ENCODE measurements at regions of chrX and their contacts with region 1.

Region 1: DNA sequence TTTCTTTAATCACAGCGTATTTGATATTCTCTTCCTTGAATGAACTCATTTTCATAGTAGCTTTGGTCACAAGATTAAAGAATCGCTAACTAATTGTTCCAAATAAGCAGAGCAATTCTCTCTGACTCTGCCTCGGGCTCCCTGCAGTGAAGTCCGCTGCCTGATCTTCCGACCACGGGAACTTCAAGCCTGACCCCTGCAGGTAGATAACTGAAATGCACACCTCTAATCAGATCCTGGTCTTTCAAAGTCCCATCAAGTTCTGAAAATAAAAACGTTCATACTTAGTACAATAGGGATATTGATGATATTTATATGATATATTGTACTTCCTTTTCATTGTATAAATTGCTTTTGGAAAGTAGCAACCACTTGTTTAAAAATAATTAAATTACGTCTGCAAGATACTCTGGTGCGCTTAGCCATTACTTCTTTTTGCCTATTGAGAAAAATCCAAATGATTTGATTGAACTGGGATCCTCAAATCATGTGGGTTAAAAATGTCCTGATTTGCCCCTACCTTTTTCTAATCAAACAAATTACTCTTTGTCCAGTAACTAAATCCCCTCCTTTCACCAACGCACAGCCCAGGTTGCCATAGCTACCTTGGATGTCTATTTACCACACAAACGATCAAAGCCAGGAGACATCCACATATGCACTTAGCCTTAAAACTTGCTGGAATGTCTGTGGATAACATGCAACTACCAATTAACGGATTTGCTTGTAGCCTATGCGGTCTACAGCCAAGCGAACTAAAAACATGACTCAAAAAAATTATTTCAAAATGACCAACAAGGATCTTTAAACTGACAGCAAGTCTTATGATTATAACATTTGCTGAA is 4.2 kb downstream of the MID1 start:
- DNase-seq: peak in 1 of 2 experiments; percentile 73
- ATAC-seq: peak; percentile 41 to 52; a peak in 3 of 6 replicates
- H3K4me3 ChIP-seq: peak overlapping the region; percentile 68
- H3K27ac ChIP-seq: peak overlapping the region; percentile 76 to 95
- H3K4me1 ChIP-seq: peaks cover 44% of the 10 kb centered on the region
- CTCF ChIP-seq: peak; percentile 75
- EP300 ChIP-seq: no peak
- POLR2A ChIP-seq: no peak
- RAD21 ChIP-seq: peak; percentile 78

Region 2: GRCh38 chrX:10555846-10556245 is 60.3 kb before region 1 on chrX:
- CTCF ChIA-PET with region 1: no interaction called
- POLR2A ChIA-PET with region 1: no interaction called
- DNase-seq: no peak
- ATAC-seq: no peak
- H3K4me3 ChIP-seq: no peak overlapping the region
- H3K27ac ChIP-seq: peak overlapping the region in 1 of 2 experiments; percentile 52; a peak in 2 of 6 replicates
- H3K4me1 ChIP-seq: peaks cover 63% of the 10 kb centered on the region
- CTCF ChIP-seq: no peak
- EP300 ChIP-seq: no peak
- POLR2A ChIP-seq: no peak
- RAD21 ChIP-seq: no peak

Region 3: DNA sequence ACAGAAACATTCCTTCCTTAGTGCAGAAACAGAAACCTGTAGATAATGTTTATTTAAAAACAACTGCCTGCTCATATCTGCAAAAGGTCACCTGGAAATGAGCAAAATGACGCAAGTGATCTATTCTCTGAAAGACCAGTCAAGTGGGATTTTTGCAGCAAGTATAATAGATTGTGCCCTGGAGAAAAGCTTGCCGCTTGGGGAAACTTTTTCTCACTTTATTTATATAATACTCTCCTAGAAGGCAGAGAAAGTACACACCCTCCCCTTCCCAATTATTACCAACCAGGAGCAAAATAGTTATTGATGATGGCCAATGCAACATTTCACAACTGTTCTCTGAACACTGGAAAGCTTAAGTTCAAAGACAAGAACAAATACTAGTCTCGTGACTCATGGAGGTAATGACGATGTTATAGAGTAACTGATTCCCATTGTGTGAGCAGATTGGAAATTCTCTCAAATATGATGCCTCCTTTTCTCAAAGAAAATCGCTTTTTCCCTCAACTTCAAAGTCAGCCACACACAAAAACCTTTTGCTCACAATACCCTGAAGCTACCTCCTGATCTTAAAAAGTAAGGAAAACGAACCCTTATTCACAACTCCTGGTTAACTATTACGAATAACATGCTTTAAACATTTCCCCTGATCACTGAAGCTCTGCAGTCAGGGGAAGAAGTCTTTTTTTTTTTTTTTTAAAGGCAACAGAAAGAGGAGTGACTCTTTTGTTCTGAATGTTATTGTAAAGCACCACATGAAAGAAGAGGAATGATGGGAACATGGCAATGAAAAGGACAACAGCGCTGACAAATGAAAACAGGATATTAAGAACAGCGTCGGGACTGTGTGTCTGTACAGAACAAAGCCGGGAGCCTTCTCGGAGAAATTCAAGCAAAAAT is 36.8 kb before region 1 on chrX:
- CTCF ChIA-PET with region 1: interaction called, 7 read pairs
- POLR2A ChIA-PET with region 1: interaction called, 10 read pairs
- DNase-seq: peak in 1 of 2 experiments; percentile 88
- ATAC-seq: peak; percentile 64 to 66
- H3K4me3 ChIP-seq: peak overlapping the region; percentile 23; the same call in 2 of the 3 replicates
- H3K27ac ChIP-seq: peak overlapping the region; percentile 95 to 96
- H3K4me1 ChIP-seq: peaks cover 84% of the 10 kb centered on the region
- CTCF ChIP-seq: no peak
- EP300 ChIP-seq: peak; percentile 91 to 94
- POLR2A ChIP-seq: no peak
- RAD21 ChIP-seq: no peak; a peak in 1 of 5 replicates

Region 4: GRCh38 chrX:10597871-10598270 is 18.3 kb before region 1 on chrX:
- CTCF ChIA-PET with region 1: interaction called, 12 read pairs
- POLR2A ChIA-PET with region 1: interaction called, 5 read pairs
- DNase-seq: peak in 1 of 2 experiments; percentile 67
- ATAC-seq: peak; percentile 76 to 88; a peak in 5 of 6 replicates
- H3K4me3 ChIP-seq: no peak overlapping the region
- H3K27ac ChIP-seq: peak overlapping the region; percentile 67 to 82
- H3K4me1 ChIP-seq: peaks cover 74% of the 10 kb centered on the region
- CTCF ChIP-seq: peak; percentile 49; the same call in 2 of the 3 replicates
- EP300 ChIP-seq: no peak
- POLR2A ChIP-seq: no peak
- RAD21 ChIP-seq: peak; percentile 57 to 63

Measured in A549 (cell line).